ENCODE measurements at regions of chr7 and their contacts with region 1.

Region 1: GRCh38 chr7:91182819-91183764 is 81.1 kb upstream of the FZD1 start:
- DNase-seq: peak; percentile 93
- H3K4me3 ChIP-seq: no peak overlapping the region
- H3K27ac ChIP-seq: no peak overlapping the region
- H3K4me1 ChIP-seq: peaks cover 17% of the 10 kb centered on the region
- H3K27me3 ChIP-seq: no peaks in the 10 kb centered on the region
- CTCF ChIP-seq: no peak
- POLR2A ChIP-seq: no peak

Region 2: GRCh38 chr7:91126762-91127161 is 56.3 kb before region 1 on chr7:
- CTCF ChIA-PET with region 1: no interaction called
- POLR2A ChIA-PET with region 1: no interaction called
- dilution Hi-C with region 1: no loop called
- intact Hi-C with region 1: no loop called
- DNase-seq: no peak
- H3K4me3 ChIP-seq: no peak overlapping the region
- H3K27ac ChIP-seq: no peak overlapping the region
- H3K4me1 ChIP-seq: no peaks in the 10 kb centered on the region
- H3K27me3 ChIP-seq: no peaks in the 10 kb centered on the region
- CTCF ChIP-seq: no peak
- POLR2A ChIP-seq: no peak

Region 3: DNA sequence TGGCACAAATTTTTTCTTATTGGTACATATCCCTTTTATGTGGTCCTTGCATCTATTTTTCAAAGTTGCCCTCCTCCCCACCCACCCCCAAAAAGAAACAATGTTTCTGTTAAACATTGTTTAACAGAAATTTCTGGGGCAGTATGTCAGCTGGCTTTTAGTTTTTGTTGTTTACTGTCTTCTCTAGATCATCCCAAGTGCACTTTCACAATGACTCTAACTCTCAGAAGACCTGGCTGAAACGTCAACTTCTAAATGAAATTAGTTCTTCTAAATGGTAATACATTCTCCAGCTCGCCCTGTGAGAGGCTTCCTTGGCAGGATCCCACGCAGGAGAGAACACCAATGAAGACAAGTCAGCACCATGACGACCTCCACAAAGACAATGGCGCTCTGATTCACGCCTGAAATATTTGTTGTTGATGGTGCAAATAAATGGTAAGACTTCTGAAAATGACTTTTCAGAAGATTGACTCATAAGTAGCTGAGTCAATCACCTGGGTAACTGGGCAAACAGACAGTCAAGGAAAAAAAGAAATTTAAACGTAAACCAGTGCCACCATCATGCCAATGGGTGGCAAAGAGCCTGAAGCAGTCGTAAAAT is 374.8 kb after region 1 on chr7:
- CTCF ChIA-PET with region 1: no interaction called
- POLR2A ChIA-PET with region 1: no interaction called
- dilution Hi-C with region 1: no loop called
- intact Hi-C with region 1: no loop called
- DNase-seq: peak; percentile 7
- H3K4me3 ChIP-seq: no peak overlapping the region
- H3K27ac ChIP-seq: no peak overlapping the region
- H3K4me1 ChIP-seq: no peaks in the 10 kb centered on the region
- H3K27me3 ChIP-seq: no peaks in the 10 kb centered on the region
- CTCF ChIP-seq: no peak
- POLR2A ChIP-seq: no peak

Region 4: GRCh38 chr7:91636129-91636724 is 453.1 kb after region 1 on chr7:
- CTCF ChIA-PET with region 1: no interaction called
- POLR2A ChIA-PET with region 1: no interaction called
- dilution Hi-C with region 1: no loop called
- intact Hi-C with region 1: loop called (anchors 5 kb)
- DNase-seq: peak; percentile 57
- H3K4me3 ChIP-seq: no peak overlapping the region
- H3K27ac ChIP-seq: no peak overlapping the region
- H3K4me1 ChIP-seq: peaks cover 6% of the 10 kb centered on the region
- H3K27me3 ChIP-seq: peaks cover 0 to 3% of the 10 kb centered on the region in 2 experiments
- CTCF ChIP-seq: peak; percentile 58 to 65
- POLR2A ChIP-seq: no peak

Measured in endothelial cell of umbilical vein (primary cell).